ENCODE measurements at regions of chr22 and their contacts with region 1.

Region 1: GRCh38 chr22:44819971-44820631 is 67.7 kb downstream of the ARHGAP8 start:
- DNase-seq: no peak
- ATAC-seq: no peak
- H3K4me3 ChIP-seq: no peak overlapping the region
- H3K4me3 Mint-ChIP-seq: no peak overlapping the region
- H3K27ac ChIP-seq: no peak overlapping the region
- H3K27ac Mint-ChIP-seq: no peak overlapping the region
- H3K4me1 ChIP-seq: no peaks in the 10 kb centered on the region
- H3K4me1 Mint-ChIP-seq: peaks cover 5% of the 10 kb centered on the region
- H3K27me3 ChIP-seq: no peaks in the 10 kb centered on the region
- H3K27me3 Mint-ChIP-seq: peaks cover 3% of the 10 kb centered on the region
- CTCF ChIP-seq: no peak

Region 2: DNA sequence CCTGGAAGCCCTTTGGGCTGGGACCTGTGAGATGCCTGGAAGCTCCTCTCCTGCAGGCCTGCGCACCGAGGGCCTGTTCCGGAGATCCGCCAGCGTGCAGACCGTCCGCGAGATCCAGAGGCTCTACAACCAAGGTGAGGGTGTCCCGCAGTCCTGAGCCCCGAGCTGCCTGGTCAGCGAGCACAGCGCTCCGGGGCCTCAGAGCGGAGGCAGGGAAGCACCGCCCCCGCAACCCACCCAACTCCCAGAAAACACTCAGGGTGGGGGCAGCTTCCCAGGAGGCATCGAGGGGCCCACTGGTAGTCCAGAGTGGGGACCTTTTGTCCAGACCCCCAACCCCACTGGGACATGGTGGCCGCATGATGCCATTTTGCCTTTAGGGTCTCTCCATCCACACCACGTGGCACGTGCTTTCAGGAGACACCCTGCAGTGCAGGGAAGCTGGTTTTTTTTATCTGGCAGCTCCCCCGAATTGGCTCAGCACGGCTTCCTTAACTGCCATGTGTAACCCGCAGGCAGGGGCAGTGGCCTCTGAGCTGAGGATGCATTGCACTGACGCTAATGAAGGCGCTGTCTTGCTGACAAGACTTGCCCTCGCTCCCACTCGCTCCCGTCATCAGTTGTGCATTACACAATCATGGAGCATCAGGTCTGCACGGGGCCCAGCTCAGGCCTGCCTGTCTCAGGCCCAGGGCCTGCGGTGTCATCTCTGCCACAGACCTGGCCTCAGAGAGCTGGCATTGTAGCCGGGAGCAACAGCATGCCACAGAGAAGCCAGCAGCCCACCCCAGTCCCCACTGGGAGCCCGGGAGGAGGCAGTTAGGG is 28.0 kb after region 1 on chr22:
- CTCF ChIA-PET with region 1: no interaction called
- POLR2A ChIA-PET with region 1: no interaction called
- intact Hi-C with region 1: no loop called
- DNase-seq: no peak
- ATAC-seq: no peak
- H3K4me3 ChIP-seq: no peak overlapping the region
- H3K4me3 Mint-ChIP-seq: no peak overlapping the region
- H3K27ac ChIP-seq: no peak overlapping the region
- H3K27ac Mint-ChIP-seq: no peak overlapping the region
- H3K4me1 ChIP-seq: no peaks in the 10 kb centered on the region
- H3K4me1 Mint-ChIP-seq: no peaks in the 10 kb centered on the region
- H3K27me3 ChIP-seq: no peaks in the 10 kb centered on the region
- H3K27me3 Mint-ChIP-seq: no peaks in the 10 kb centered on the region
- CTCF ChIP-seq: no peak

Region 3: GRCh38 chr22:44955102-44955501 is 135.0 kb after region 1 on chr22:
- CTCF ChIA-PET with region 1: no interaction called
- POLR2A ChIA-PET with region 1: no interaction called
- intact Hi-C with region 1: no loop called
- DNase-seq: no peak
- ATAC-seq: no peak
- H3K4me3 ChIP-seq: no peak overlapping the region
- H3K4me3 Mint-ChIP-seq: no peak overlapping the region
- H3K27ac ChIP-seq: no peak overlapping the region
- H3K27ac Mint-ChIP-seq: no peak overlapping the region
- H3K4me1 ChIP-seq: no peaks in the 10 kb centered on the region
- H3K4me1 Mint-ChIP-seq: no peaks in the 10 kb centered on the region
- H3K27me3 ChIP-seq: no peaks in the 10 kb centered on the region
- H3K27me3 Mint-ChIP-seq: peaks cover 7% of the 10 kb centered on the region
- CTCF ChIP-seq: no peak

Region 4: GRCh38 chr22:45096256-45096907 is 276.3 kb after region 1 on chr22:
- CTCF ChIA-PET with region 1: interaction called, 4 read pairs
- POLR2A ChIA-PET with region 1: no interaction called
- intact Hi-C with region 1: loop called (anchors 5 kb)
- DNase-seq: peak; percentile 7 to 58 (median 37)
- ATAC-seq: peak; percentile 44
- H3K4me3 ChIP-seq: no peak overlapping the region
- H3K4me3 Mint-ChIP-seq: no peak overlapping the region
- H3K27ac ChIP-seq: no peak overlapping the region
- H3K27ac Mint-ChIP-seq: no peak overlapping the region
- H3K4me1 ChIP-seq: no peaks in the 10 kb centered on the region
- H3K4me1 Mint-ChIP-seq: no peaks in the 10 kb centered on the region
- H3K27me3 ChIP-seq: no peaks in the 10 kb centered on the region
- H3K27me3 Mint-ChIP-seq: peaks cover 34% of the 10 kb centered on the region
- CTCF ChIP-seq: peak; percentile 54

Measured in CD8-positive, alpha-beta T cell (primary cell).